ENCODE measurements at regions of chr7 and their contacts with region 1.

Region 1: DNA sequence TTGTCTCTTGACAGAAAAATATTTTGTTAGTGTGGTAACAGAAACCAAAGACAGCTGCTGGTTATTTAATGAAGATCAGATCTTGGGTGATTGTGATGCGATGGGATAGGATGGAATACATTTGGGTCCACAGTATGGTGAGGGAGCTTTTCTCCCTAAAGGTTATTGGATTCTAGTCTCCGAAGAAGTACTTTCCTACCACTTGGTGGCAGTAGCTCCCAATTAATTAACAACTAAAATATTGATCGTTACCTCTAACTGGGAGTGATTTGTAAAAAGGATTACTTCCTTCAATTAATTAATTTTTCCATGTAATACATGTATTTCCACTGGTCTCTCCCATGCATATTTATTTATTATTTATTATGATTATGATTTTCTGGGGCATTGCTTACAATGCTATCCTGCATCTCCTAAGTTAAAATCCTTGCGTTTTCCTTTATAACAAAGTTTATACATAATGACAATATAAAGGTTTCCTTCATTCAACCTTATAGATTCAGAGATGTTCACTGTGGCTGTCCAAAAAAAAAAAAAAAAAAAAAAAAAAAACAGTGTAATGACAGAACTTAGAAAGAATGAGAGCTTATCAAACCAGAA is 25.6 kb downstream of the TMEM196 start:
- DNase-seq: peak in 1 of 2 experiments; percentile 60
- H3K4me3 ChIP-seq: no peak overlapping the region
- H3K27ac ChIP-seq: no peak overlapping the region
- H3K4me1 ChIP-seq: 0 out of 2 replicates have a peak, but pooled peaks cover 5% of the 10 kb centered on the region
- H3K27me3 ChIP-seq: no peaks in the 10 kb centered on the region
- CTCF ChIP-seq: peak; percentile 94

Region 2: DNA sequence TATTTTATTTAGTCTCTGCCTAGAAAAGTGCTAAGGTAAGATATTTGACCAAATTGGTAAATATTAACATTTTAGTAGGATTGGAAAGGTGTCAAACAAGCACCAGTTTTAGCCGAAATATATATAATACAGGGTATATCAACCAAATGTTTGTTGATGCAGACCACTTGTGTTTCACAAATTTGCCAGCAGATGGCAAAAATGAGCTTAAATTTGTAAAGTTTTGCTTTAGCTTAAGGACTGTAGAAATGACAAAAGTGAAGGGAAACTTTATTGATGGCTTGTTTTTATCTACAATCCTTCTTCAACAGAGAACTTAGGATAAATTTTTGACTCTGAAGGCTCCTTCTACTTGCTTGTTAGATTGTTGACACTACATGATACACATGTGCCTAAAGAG is 34.2 kb before region 1 on chr7:
- CTCF ChIA-PET with region 1: interaction called, 23 read pairs
- POLR2A ChIA-PET with region 1: interaction called, 7 read pairs
- intact Hi-C with region 1: loop called (anchors 2 kb)
- DNase-seq: peak; percentile 37 to 57
- H3K4me3 ChIP-seq: no peak overlapping the region
- H3K27ac ChIP-seq: no peak overlapping the region
- H3K4me1 ChIP-seq: no peaks in the 10 kb centered on the region
- H3K27me3 ChIP-seq: no peaks in the 10 kb centered on the region
- CTCF ChIP-seq: peak; percentile 81

Region 3: DNA sequence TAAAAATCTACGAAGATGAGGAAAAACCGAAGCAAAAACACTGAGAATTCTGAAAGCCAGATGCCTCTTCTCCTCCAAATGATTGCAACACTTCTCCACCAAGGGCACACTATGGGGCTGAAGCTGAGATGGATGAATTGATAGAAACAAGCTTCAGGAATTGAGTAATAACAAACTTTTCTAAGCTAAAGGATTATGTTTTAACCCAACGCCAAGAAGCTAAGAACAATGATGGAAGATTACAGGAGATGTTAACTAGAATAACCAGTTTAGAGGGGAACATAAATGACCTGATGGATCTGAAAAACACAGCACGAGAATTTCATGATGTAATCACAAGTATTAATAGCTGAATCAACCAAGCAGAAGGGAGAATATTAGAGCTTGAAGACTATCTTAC is 341.6 kb after region 1 on chr7:
- CTCF ChIA-PET with region 1: no interaction called
- POLR2A ChIA-PET with region 1: no interaction called
- intact Hi-C with region 1: no loop called
- DNase-seq: peak in 1 of 2 experiments; percentile 61
- H3K4me3 ChIP-seq: no peak overlapping the region
- H3K27ac ChIP-seq: no peak overlapping the region; the same call in 1 of the 2 replicates
- H3K4me1 ChIP-seq: peaks cover 10% of the 10 kb centered on the region; the same call in 1 of the 2 replicates
- H3K27me3 ChIP-seq: no peaks in the 10 kb centered on the region
- CTCF ChIP-seq: no peak

Region 4: DNA sequence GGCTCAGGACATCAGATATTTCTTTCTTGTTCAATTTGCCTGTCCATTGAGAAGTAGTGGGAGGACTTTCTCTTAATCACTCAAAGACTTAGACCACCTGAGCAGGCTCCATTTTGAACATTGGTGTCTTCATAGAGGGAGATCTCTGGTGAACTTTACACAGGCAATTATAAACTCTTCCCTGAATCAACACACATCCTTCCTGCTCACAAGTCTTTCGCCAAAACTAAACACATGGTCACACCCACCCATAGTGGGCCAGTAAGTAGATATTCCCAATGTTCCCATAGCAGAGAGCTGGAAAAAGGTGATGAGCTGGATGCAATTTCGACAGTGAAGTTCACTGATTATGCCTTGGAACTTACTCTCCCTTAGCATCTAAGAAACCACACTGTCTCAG is 477.5 kb after region 1 on chr7:
- CTCF ChIA-PET with region 1: interaction called, 11 read pairs
- POLR2A ChIA-PET with region 1: no interaction called
- intact Hi-C with region 1: no loop called
- DNase-seq: no peak
- H3K4me3 ChIP-seq: no peak overlapping the region
- H3K27ac ChIP-seq: no peak overlapping the region
- H3K4me1 ChIP-seq: peaks cover 18% of the 10 kb centered on the region
- H3K27me3 ChIP-seq: no peaks in the 10 kb centered on the region
- CTCF ChIP-seq: no peak

Region 5: DNA sequence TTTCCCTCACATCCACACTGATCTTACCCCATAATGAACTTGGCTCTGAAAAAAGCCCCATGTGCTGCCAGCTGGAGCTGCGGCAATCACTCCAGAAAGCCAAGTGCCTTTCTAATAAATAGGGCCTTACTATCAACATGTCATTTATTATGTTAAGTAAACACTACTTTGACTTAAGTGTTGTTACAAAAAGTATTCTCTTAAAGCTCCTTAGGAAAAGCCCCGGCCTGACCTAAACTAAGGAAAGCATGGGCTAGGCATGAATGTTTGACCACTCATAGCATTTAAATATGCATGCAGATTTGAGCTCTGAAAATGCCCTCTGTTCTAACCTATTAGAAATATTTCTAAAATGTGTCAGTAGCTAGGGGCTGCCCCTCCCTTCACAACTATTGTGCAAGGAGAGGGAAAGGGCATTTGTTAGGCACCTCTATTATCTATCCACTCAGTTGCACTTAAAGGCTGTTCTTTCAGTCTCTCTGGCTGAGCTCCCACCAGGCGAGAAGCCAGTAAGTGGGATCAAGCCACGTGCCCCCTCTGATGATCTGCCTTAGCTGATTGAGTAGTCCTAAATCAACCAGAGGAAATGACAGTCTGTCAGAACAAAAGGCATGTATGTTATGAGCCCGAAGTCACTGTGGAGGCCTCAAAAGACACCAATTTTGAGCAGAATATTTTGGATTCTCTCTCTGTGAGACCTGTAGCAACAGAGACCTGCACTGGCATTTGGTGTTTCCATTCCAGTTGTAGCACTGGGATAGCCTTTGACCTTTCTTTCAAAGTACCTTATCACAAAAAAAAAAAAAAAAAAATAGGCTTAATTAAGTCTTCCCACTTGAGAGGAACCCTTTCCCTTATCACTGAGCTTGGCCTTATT is 660.0 kb after region 1 on chr7:
- CTCF ChIA-PET with region 1: interaction called, 8 read pairs
- POLR2A ChIA-PET with region 1: no interaction called
- intact Hi-C with region 1: loop called (anchors 5 kb)
- DNase-seq: peak; percentile 59 to 91
- H3K4me3 ChIP-seq: no peak overlapping the region; the same call in 1 of the 2 replicates
- H3K27ac ChIP-seq: peak overlapping the region; percentile 72
- H3K4me1 ChIP-seq: peaks cover 30% of the 10 kb centered on the region
- H3K27me3 ChIP-seq: no peaks in the 10 kb centered on the region
- CTCF ChIP-seq: no peak

Region 6: DNA sequence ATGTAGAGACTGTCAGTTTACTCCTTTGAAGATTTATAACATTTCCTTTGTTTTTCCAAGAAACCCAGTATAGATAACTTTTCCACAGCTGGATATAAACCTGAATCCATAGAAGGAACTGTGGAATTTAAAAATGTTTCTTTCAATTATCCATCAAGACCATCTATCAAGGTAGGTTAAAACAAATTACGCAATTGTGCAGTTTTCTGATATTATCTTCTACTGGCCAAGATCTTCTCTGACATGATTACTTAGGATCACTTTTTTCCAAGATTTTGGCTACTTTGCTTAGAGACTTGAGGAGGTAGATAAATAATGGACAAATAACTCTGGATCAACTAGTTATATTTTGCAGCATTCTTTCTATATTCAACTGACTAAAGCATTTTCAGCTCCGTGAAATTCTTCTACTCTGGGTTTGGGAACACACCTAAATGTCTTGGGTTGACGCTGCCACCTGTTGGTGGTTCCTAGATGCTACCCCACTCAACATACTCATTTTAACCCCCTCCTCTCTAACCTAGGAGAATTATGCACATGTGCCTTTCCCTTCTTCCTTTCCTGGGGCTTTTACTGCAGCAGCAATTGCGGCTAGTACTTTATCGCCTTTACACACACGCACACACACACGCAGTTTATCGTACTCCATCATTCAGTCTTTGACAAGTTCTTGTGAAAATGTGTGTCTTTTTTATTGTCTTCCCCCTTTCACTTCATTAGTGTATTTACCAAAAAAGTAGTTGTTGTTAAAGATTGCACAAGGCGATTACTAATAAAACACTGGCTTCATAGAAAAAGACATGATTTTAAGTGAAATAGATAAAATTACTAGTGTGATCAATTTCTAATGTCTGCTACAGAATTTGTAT is 900.3 kb after region 1 on chr7:
- CTCF ChIA-PET with region 1: interaction called, 3 read pairs
- POLR2A ChIA-PET with region 1: no interaction called
- intact Hi-C with region 1: loop called (anchors 1 kb)
- DNase-seq: peak in 1 of 2 experiments; percentile 35
- H3K4me3 ChIP-seq: no peak overlapping the region
- H3K27ac ChIP-seq: no peak overlapping the region
- H3K4me1 ChIP-seq: no peaks in the 10 kb centered on the region
- H3K27me3 ChIP-seq: no peaks in the 10 kb centered on the region
- CTCF ChIP-seq: peak; percentile 69